Prostate gland (tissue), 2 donors: ENCODE measurements at regions of chr1 and their contacts with region 1.

Region 1: GRCh38 chr1:168342572-168343280 is 62.0 kb downstream of the TBX19 start:
- DNase-seq: peak; percentile 74
- H3K4me3 ChIP-seq: no peak overlapping the region
- H3K27ac ChIP-seq: peak overlapping the region in 1 of 2 donors; percentile 28
- H3K4me1 ChIP-seq: no peaks in the 10 kb centered on the region
- H3K27me3 ChIP-seq: no peaks in the 10 kb centered on the region
- CTCF ChIP-seq: peak; percentile 53 to 89 (median 83)
- POLR2A ChIP-seq: no peak

Region 2: GRCh38 chr1:168430321-168430720 is 87.6 kb after region 1 on chr1:
- intact Hi-C with region 1: loop called (anchors 5 kb)
- DNase-seq: no peak
- H3K4me3 ChIP-seq: no peak overlapping the region
- H3K27ac ChIP-seq: peak overlapping the region; percentile 34 to 45
- H3K4me1 ChIP-seq: no peaks in the 10 kb centered on the region
- H3K27me3 ChIP-seq: no peaks in the 10 kb centered on the region
- CTCF ChIP-seq: no peak
- POLR2A ChIP-seq: no peak

Region 3: DNA sequence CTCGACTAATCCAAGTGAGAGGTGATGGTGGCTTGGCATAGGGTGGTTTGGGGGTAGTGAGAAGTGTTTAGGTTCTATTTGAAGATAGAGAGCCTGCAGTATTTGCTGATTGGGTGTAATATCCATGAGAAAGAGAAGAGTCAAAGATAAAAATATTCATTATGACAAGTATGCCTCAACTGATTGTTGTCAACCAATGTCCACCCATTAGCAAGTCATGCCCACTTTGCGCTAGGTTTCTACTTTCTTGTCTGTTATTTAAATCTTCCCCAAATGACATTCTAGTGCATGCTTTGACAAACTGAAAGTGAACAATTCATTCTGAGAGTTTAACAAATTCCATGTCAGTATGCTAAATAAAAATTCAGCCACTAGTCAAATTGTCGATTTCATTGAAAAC is 229.9 kb after region 1 on chr1:
- intact Hi-C with region 1: loop called (anchors 2 kb)
- DNase-seq: no peak
- H3K4me3 ChIP-seq: no peak overlapping the region
- H3K27ac ChIP-seq: no peak overlapping the region
- H3K4me1 ChIP-seq: no peaks in the 10 kb centered on the region
- H3K27me3 ChIP-seq: no peaks in the 10 kb centered on the region
- CTCF ChIP-seq: no peak
- POLR2A ChIP-seq: no peak

Region 4: GRCh38 chr1:169348383-169349036 is 1005.8 kb after region 1 on chr1:
- intact Hi-C with region 1: loop called (anchors 2 kb)
- DNase-seq: peak; percentile 12
- H3K4me3 ChIP-seq: no peak overlapping the region
- H3K27ac ChIP-seq: no peak overlapping the region
- H3K4me1 ChIP-seq: no peaks in the 10 kb centered on the region
- H3K27me3 ChIP-seq: no peaks in the 10 kb centered on the region
- CTCF ChIP-seq: peak; percentile 74 to 88 (median 84)
- POLR2A ChIP-seq: no peak